ENCODE measurements at regions of chr9 and their contacts with region 1.

Region 1: DNA sequence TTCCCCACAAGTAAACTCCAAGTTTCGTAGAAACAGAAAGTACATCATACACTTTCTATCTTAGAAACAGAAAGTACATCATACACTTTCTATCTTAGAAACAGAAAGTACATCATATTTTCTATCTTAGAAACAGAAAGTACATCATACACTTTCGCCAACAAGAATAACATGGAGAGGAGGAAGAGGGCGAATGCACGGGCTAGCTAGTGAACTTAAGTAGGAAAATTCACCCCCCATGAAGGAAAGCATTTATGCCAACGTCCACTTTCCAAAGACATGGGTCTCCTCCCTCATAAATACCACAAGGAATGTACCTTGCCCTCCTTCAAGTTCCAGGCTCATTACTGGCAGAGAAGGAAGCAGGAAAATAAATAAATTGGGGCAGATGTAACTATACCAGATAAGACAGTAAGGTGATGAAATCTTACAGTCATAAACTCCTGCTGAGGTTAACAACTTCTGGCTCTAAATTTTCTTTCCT is 64.7 kb downstream of the FRMD3 start:
- H3K4me3 Mint-ChIP-seq: peak overlapping the region; percentile 71
- H3K27ac Mint-ChIP-seq: peak overlapping the region; percentile 86
- H3K4me1 Mint-ChIP-seq: peaks cover 43% of the 10 kb centered on the region
- H3K27me3 Mint-ChIP-seq: no peaks in the 10 kb centered on the region

Region 2: GRCh38 chr9:83419961-83420360 is 53.6 kb before region 1 on chr9:
- intact Hi-C with region 1: no loop called
- H3K4me3 Mint-ChIP-seq: no peak overlapping the region
- H3K27ac Mint-ChIP-seq: no peak overlapping the region
- H3K4me1 Mint-ChIP-seq: no peaks in the 10 kb centered on the region
- H3K27me3 Mint-ChIP-seq: peaks cover 2% of the 10 kb centered on the region

Region 3: GRCh38 chr9:83432104-83432639 is 41.4 kb before region 1 on chr9:
- intact Hi-C with region 1: loop called (anchors 2 kb)
- H3K4me3 Mint-ChIP-seq: no peak overlapping the region
- H3K27ac Mint-ChIP-seq: peak overlapping the region; percentile 66
- H3K4me1 Mint-ChIP-seq: peaks cover 49% of the 10 kb centered on the region
- H3K27me3 Mint-ChIP-seq: peaks cover 4% of the 10 kb centered on the region

Measured in dendritic cell treated with granulocyte-macrophage colony-stimulating factor and Interleukin-4, amounts not matched to agents 40 ng/mL and 50 ng/mL, for 4 days (primary cell).